ENCODE measurements at regions of chr1 and their contacts with region 1.

Region 1: DNA sequence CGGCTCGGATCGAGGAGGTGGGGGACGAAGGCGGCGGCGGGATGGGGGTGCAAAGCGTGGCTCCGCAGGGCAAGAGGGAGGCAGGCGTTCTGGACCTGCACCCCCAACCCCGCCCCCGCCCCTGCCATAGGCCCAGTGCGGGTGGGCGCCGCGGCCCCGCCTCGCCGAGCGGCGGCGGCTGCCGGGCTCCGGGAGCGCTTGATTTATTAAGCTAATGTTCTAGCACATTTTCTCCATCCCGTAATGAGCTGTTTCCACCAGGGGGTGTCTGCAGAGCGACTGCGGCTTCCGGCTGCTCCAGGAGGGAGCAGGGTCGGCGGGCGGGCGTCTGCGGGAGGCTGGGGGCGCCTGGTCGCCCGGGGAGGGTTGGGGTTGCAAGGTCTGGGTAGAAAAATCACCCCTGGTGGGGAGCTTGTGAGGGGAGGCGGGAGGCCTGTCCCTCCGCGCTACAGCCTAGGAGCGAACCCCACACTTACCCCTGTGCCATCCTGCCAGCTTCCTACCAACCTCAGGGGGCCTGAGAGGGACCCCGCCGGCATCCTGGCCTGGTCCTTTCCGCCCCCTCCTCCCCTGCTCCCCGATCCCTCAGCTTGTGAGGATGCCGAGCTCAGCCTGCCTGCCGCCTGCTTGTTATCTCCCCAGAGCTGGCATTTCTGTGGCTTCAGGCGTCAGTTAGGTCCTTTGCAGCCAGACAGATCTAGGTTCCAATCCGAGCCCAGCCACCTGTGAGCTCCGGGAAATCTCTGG is 48.5 kb upstream of the ACOT11 start:
- DNase-seq: peak in 1 of 3 donors; percentile 15
- H3K4me3 ChIP-seq: peak overlapping the region in 1 of 3 experiments; percentile 53
- H3K4me3 Mint-ChIP-seq: peak overlapping the region; percentile 66 to 82
- H3K27ac ChIP-seq: no peak overlapping the region
- H3K27ac Mint-ChIP-seq: no peak overlapping the region
- H3K4me1 ChIP-seq: peaks cover 10 to 14% of the 10 kb centered on the region in 2 donors
- H3K4me1 Mint-ChIP-seq: peaks cover 9% of the 10 kb centered on the region
- H3K27me3 ChIP-seq: peaks cover 8 to 27% of the 10 kb centered on the region in 2 donors
- H3K27me3 Mint-ChIP-seq: peaks cover 23 to 38% (median 29%) of the 10 kb centered on the region in 3 donors
- CTCF ChIP-seq: peak; percentile 30

Region 2: GRCh38 chr1:54180701-54181360 is 318.7 kb before region 1 on chr1:
- intact Hi-C with region 1: loop called in 1 of 2 experiments (anchors 10 kb)
- DNase-seq: no peak
- H3K4me3 ChIP-seq: no peak overlapping the region
- H3K4me3 Mint-ChIP-seq: no peak overlapping the region
- H3K27ac ChIP-seq: no peak overlapping the region
- H3K27ac Mint-ChIP-seq: peak overlapping the region in 2 of 7 donors; percentile 52 to 57
- H3K4me1 ChIP-seq: no peaks in the 10 kb centered on the region
- H3K4me1 Mint-ChIP-seq: peaks cover 2% of the 10 kb centered on the region
- H3K27me3 ChIP-seq: no peaks in the 10 kb centered on the region
- H3K27me3 Mint-ChIP-seq: peaks cover 0 to 3% (median 0%) of the 10 kb centered on the region in 3 donors
- CTCF ChIP-seq: no peak

Region 3: DNA sequence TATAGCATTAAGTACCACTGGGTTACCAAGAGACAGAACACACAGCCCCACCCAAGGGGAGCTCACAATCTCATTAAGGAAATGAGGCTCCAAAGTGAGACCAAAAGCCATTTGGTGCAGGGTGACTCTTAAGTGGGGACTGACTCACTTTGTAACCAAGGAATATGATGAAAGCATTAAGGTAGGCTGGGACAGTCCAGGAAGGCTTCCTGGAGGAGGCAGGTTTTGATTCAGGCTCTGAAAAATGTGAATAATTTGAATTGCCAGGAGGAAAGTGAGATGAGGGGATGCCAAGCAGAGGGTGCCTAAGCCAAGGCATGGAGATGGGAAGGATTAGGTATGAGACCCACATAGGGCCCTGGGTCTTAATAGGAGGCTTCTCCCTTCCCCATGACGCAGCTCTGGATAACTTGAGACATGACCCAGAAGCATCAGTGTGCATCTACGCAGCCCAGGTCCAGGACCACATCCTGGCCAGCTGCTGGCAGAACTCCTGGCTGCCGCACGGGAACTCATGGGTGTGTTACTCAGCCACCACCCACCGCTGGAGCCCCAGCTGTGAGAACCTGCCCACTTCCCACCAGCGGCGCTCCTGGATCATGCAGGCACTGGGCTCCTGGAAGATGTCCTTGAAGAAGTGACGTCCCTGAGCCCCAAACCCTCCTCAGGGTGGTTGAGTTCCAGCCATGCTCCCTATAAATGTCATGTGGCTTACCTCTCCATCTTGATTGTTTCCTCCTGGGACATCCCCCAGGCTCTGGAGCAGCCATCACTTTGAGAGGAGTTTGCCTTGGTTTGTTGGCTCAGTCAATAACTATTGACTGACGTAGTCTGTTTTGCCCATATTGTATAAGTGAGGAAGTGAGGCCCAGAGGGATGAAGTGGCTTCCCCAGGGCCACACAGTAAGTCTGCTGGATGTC is 210.3 kb after region 1 on chr1:
- intact Hi-C with region 1: no loop called
- DNase-seq: no peak
- H3K4me3 ChIP-seq: no peak overlapping the region
- H3K4me3 Mint-ChIP-seq: no peak overlapping the region
- H3K27ac ChIP-seq: no peak overlapping the region
- H3K27ac Mint-ChIP-seq: no peak overlapping the region
- H3K4me1 ChIP-seq: no peaks in the 10 kb centered on the region
- H3K4me1 Mint-ChIP-seq: no peaks in the 10 kb centered on the region
- H3K27me3 ChIP-seq: no peaks in the 10 kb centered on the region
- H3K27me3 Mint-ChIP-seq: peaks cover 0 to 5% (median 2%) of the 10 kb centered on the region in 3 donors
- CTCF ChIP-seq: no peak